ENCODE measurements at regions of chr1 and their contacts with region 1.

Region 1: GRCh38 chr1:85109475-85109874 is 61.2 kb upstream of the MCOLN3 start:
- DNase-seq: no peak
- H3K4me3 ChIP-seq: no peak overlapping the region
- CTCF ChIP-seq: peak; percentile 89

Region 2: GRCh38 chr1:84892705-84893618 is 216.5 kb before region 1 on chr1 and contains the start of gene LPAR3:
- CTCF ChIA-PET with region 1: no interaction called
- POLR2A ChIA-PET with region 1: no interaction called
- DNase-seq: no peak
- H3K4me3 ChIP-seq: peak within 1 kb of the TSS; percentile 16
- CTCF ChIP-seq: no peak

Region 3: DNA sequence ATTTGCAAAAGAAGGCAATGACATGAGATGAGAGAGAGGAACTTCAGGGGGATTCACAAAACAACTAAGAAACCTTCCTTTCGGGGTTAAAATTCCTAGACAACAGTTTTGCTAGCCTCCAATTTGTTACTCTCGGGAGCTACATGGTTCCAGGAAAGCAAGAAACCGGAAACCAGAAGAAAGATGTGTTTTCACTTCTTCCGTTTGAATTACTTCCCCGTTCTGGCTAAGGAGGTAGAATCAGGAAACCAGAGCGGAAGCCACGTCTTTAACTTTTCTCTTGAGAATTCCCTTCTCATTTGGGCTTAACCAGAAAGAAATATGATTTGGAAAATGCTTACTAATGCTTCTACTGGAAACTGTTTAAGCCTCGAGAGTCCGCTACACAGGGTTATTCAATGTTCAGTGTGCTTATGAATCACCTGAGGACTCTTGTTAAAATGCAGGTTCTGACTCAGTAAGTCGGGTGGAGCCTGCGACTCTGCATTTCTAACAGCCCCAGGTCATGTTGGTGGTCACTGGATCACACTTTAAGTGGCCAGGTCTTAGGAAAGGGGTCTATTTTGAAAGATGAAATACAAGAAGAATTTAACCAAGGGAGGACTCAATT is 17.7 kb before region 1 on chr1:
- CTCF ChIA-PET with region 1: interaction called, 24 read pairs
- POLR2A ChIA-PET with region 1: no interaction called
- DNase-seq: no peak
- H3K4me3 ChIP-seq: no peak overlapping the region
- CTCF ChIP-seq: no peak

Region 4: DNA sequence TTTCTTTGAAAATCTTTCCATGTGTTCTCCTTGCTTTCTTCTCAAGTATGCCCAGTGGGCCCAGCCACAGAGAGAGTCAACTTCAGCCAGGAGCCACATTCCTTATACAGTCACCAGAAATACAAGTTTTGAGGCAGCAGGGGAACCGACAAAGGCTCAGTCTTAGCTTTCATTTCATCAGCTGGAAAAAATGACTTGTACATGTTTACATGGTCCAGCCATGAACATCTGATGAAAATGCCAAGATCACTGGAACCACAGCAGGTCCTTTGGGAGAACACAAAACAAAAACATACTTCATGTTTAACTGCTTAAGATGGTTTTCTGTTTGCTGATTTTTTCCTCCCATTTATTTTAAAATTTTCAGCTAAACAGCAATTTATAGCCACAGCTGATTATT is 18.9 kb after region 1 on chr1:
- CTCF ChIA-PET with region 1: interaction called, 25 read pairs
- POLR2A ChIA-PET with region 1: no interaction called
- DNase-seq: no peak
- H3K4me3 ChIP-seq: no peak overlapping the region
- CTCF ChIP-seq: no peak

Region 5: DNA sequence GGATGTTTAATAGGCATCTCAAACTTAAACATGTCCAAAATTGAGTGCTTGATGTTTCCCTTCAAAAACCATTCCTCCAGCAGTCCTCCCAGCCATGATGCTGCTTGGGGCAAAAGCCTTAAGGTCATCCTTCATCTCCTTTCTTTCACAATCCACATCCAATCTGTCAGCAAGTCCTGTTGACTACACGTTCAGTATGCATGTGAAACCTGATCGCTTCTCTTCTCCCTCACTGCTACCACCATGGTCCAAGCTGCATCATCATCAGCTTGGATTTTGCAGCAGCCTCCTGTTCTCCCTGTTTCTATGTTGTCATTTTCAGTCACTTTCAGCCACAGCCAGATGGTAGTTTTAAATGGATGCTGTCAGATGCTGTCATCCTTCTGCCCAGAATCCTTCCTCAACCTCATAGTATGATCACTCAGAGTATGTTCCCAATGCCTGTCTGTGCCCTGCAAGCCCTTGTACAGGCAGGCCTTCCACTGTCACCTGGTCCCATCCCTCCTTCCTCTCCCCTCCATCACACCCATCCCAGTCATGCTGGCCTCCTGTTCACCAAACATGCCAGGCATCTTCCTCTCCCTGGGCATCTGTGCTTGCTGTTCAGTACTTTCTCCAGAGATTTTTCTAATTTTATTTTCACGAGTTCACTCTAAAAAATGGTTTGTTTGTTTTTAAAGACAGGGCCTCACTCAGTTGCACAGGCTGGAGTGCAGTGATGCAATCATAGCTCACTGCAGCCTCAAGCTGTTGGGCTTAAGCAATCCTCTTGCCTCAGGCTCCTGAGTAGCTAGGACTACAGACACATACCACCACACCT is 25.3 kb after region 1 on chr1:
- CTCF ChIA-PET with region 1: interaction called, 25 read pairs
- POLR2A ChIA-PET with region 1: no interaction called
- DNase-seq: peak; percentile 62
- H3K4me3 ChIP-seq: no peak overlapping the region
- CTCF ChIP-seq: no peak

Region 6: DNA sequence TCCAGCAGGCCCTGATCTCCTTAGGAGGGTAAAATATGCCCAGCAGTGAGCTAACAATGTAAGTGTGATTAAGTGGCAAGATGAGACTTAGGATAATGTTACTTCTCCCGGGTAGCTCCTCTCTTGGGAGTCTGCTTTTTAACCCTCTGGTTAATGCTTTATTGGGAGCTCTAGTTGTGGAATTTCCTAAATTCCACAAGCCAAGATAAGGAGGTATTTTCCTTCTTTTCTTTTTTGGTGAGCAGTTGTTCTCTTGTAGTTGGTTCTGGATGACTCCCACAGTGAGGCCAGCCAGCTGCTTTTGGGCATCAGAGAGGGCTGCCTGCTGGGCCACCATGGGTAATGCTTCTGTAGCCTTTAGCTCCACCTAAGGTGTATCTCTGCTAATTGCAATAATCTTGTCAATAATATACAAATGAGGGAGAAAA is 130.7 kb after region 1 on chr1:
- CTCF ChIA-PET with region 1: interaction called, 44 read pairs
- POLR2A ChIA-PET with region 1: interaction called, 3 read pairs
- DNase-seq: no peak
- H3K4me3 ChIP-seq: no peak overlapping the region
- CTCF ChIP-seq: no peak

Region 7: GRCh38 chr1:85276215-85276977 is 166.9 kb after region 1 on chr1 and contains the start of gene BCL10:
- CTCF ChIA-PET with region 1: interaction called, 11 read pairs
- POLR2A ChIA-PET with region 1: no interaction called
- DNase-seq: peak; percentile 82
- H3K4me3 ChIP-seq: peak within 1 kb of the TSS; percentile 94
- CTCF ChIP-seq: no peak